ENCODE measurements at regions of chr1 and their contacts with region 1.

Region 1: GRCh38 chr1:15994590-15995351 is 9.3 kb upstream of the SRARP start:
- DNase-seq: peak; percentile 63 to 70
- H3K4me3 ChIP-seq: no peak overlapping the region
- H3K27ac ChIP-seq: no peak overlapping the region
- H3K4me1 ChIP-seq: peaks cover 0 to 10% (median 0%) of the 10 kb centered on the region in 4 donors
- H3K27me3 ChIP-seq: no peaks in the 10 kb centered on the region
- CTCF ChIP-seq: peak in 5 of 7 experiments; percentile 70 to 87 (median 85)
- EP300 ChIP-seq: no peak
- POLR2A ChIP-seq: no peak

Region 2: GRCh38 chr1:15760520-15761211 is 234.1 kb before region 1 on chr1:
- intact Hi-C with region 1: no loop called
- DNase-seq: peak in 1 of 2 donors; percentile 81
- H3K4me3 ChIP-seq: peak overlapping the region; percentile 6 to 78 (median 46)
- H3K27ac ChIP-seq: peak overlapping the region; percentile 60 to 84 (median 80)
- H3K4me1 ChIP-seq: peaks cover 60 to 92% (median 79%) of the 10 kb centered on the region in 4 donors
- H3K27me3 ChIP-seq: peaks cover 0 to 51% (median 17%) of the 10 kb centered on the region in 3 donors
- CTCF ChIP-seq: no peak
- EP300 ChIP-seq: no peak
- POLR2A ChIP-seq: no peak

Region 3: DNA sequence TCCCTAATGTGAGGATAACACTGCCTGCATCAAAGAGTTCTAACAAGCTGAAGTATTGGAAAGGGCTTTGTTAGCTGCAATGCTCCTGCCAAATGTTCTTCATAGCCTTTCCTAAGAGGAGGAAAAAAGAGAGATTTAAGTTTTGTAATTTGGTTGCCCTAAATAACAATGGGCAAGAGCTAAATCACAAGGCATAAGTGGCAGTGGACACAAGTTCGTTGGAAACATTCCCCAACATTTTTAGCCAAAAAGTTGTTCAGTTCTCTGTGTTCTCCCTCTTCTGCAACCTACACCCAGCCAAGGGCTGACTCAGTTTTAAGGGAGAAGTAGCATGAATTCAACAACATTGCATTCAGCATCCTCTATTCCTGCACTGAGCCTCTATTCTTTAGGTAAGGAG is 184.7 kb before region 1 on chr1:
- intact Hi-C with region 1: loop called (anchors 10 kb)
- DNase-seq: no peak
- H3K4me3 ChIP-seq: no peak overlapping the region
- H3K27ac ChIP-seq: no peak overlapping the region
- H3K4me1 ChIP-seq: peaks cover 0 to 10% (median 5%) of the 10 kb centered on the region in 4 donors
- H3K27me3 ChIP-seq: no peaks in the 10 kb centered on the region
- CTCF ChIP-seq: no peak
- EP300 ChIP-seq: no peak
- POLR2A ChIP-seq: no peak